Left colon (tissue), 2 donors: ENCODE measurements at regions of chr1 and their contacts with region 1.

Region 1: GRCh38 chr1:186482661-186483255 is 21.8 kb upstream of the PDC start:
- DNase-seq: peak; percentile 24 to 35
- ATAC-seq: peak; percentile 52

Region 2: DNA sequence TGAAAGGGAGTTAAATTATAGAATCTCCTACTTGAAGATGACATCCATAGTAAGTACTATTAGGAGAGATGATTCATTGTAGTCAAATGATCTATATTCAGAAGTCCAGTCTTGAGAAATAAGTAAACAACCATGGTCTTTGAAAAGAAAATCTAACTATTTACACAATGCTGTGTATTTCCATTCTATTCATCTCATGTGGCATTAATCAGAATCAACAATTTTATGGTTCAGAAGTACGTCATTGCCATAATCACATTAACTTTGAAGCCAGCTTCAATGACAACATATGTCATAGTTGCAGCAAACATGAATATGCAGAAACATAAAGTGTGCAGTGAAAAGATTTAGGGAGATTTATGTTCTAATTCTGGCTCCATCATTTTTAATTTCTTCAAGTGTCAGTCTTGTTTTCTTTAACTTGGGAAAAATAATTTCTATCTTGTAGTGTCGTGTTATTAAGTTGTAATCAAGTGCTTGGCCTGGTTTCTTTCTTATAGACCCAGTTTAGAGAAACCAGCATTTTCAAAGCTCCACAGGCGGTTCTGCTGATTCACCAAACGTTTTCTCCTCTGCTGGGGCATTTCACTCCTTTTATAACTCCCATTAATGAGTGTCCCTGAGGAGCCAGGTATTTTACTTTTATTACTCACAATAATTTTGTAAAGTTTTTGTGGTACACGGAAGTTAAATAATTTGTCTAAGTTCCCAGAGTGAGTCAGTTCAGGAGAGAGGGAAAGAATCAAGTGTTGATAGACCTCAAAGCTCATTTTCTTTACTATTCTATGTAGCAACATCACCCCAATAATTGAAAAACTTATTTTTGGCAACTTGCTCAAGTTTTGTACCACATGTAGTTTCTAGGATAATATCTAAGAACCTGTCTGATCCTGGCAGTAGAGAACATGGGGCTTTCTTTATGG is 233.4 kb after region 1 on chr1:
- intact Hi-C with region 1: loop called in 1 of 2 experiments (anchors 10 kb)
- DNase-seq: no peak
- ATAC-seq: no peak

Region 3: DNA sequence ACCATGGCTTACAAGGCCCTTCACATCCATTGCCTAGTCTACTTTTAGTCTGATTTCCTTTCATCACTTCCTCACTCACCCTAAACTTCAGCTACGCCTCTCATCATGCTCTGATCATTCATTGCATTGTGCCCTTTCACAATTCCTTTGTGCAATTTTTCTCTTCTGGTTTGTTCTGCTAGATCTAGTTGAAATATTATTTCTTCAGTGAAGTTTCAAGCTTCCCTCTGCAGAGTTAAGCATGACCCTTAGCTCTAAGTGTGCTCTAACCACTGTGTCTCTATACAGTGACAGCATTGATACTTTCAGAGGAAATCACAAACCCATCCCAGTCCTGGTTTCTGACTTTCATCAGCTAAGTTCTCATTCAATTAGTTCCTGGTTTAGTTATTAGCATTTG is 512.1 kb after region 1 on chr1:
- intact Hi-C with region 1: loop called in 1 of 2 experiments (anchors 10 kb)
- DNase-seq: no peak
- ATAC-seq: no peak